ENCODE measurements at regions of chr19 and their contacts with region 1.

Region 1: GRCh38 chr19:1252821-1253513 is 4.6 kb downstream of the MIDN start:
- DNase-seq: peak; percentile 85
- ATAC-seq: peak; percentile 16
- H3K4me3 Mint-ChIP-seq: peak overlapping the region; percentile 91
- H3K27ac Mint-ChIP-seq: peak overlapping the region; percentile 81
- H3K4me1 Mint-ChIP-seq: peaks cover 30% of the 10 kb centered on the region
- H3K27me3 Mint-ChIP-seq: no peaks in the 10 kb centered on the region

Region 2: DNA sequence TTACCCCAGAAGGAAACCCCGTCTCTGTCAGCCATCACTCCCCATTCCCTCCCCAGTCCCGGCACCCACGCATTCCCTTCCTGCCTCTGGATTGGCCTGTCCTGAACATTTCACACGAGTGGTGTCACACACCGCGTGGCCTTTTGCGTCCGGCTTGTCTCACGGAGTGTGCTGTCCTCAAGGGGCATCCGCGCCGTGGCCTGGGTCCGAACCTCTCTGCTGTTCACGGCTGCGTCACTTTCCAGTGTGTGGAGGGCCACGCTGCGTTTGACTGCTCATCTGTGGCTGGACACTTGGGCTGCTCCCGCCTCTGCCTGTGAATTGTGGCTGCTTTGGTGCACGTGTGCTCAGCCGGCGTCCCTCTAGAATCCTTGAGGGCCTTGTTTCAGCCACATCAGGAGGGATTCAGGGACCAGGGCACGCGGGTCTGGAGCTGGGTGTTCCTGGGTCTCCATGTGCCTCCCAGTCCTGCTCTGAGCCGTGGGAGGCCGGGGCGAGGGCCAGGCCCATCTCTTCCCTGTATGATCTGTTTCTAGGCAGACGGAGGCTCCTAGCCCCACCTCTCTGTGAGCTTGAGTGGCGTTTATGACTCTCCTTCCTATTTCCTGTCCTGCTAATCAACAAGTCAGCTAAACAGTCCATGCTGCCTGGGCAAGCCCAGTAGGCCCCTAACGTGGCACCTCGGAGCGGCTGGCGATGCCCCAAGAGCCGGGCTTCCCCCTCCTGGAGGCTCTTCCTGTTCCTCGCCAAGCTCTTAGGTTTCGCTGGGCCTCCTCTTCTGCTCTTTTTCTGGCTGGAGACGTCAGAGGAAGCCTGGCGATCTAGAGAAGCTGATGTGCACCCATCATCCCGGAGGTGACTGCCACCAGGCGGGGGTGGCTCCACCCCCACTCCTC is 39.3 kb before region 1 on chr19:
- CTCF ChIA-PET with region 1: no interaction called
- POLR2A ChIA-PET with region 1: no interaction called
- DNase-seq: peak; percentile 58
- ATAC-seq: peak; percentile 65
- H3K4me3 Mint-ChIP-seq: peak overlapping the region; percentile 60
- H3K27ac Mint-ChIP-seq: peak overlapping the region; percentile 91
- H3K4me1 Mint-ChIP-seq: peaks cover 35% of the 10 kb centered on the region
- H3K27me3 Mint-ChIP-seq: no peaks in the 10 kb centered on the region

Region 3: GRCh38 chr19:1269065-1269477 is 16.1 kb after region 1 on chr19 and contains the start of gene CIRBP:
- CTCF ChIA-PET with region 1: interaction called, 606 read pairs
- POLR2A ChIA-PET with region 1: interaction called, 73 read pairs
- DNase-seq: peak; percentile 100
- ATAC-seq: peak; percentile 76
- H3K4me3 Mint-ChIP-seq: peak within 1 kb of the TSS; percentile 83
- H3K27ac Mint-ChIP-seq: peak within 1 kb of the TSS; percentile 90
- H3K4me1 Mint-ChIP-seq: peaks cover 75% of the 10 kb centered on the region
- H3K27me3 Mint-ChIP-seq: peaks cover 2% of the 10 kb centered on the region
- total RNA-seq, gene CIRBP: 172 to 195 TPM